ENCODE measurements at regions of chr1 and their contacts with region 1.

Region 1: GRCh38 chr1:206716870-206717673 is 32.4 kb downstream of the MAPKAPK2 start:
- DNase-seq: no peak
- ATAC-seq: peak; percentile 32
- H3K4me3 ChIP-seq: no peak overlapping the region
- H3K4me3 Mint-ChIP-seq: peak overlapping the region; percentile 32 to 72 (median 54)
- H3K27ac ChIP-seq: no peak overlapping the region
- H3K27ac Mint-ChIP-seq: peak overlapping the region; percentile 15 to 89 (median 67)
- H3K4me1 ChIP-seq: peaks cover 30 to 69% of the 10 kb centered on the region in 2 donors
- H3K4me1 Mint-ChIP-seq: peaks cover 65 to 87% (median 79%) of the 10 kb centered on the region in 7 donors
- H3K27me3 ChIP-seq: no peaks in the 10 kb centered on the region
- H3K27me3 Mint-ChIP-seq: no peaks in the 10 kb centered on the region

Region 2: GRCh38 chr1:206658264-206658980 is 58.6 kb before region 1 on chr1:
- CTCF ChIA-PET with region 1: no interaction called
- POLR2A ChIA-PET with region 1: no interaction called
- intact Hi-C with region 1: loop called in 1 of 2 experiments (anchors 2 kb)
- DNase-seq: peak; percentile 17 to 69 (median 43)
- ATAC-seq: peak; percentile 95
- H3K4me3 ChIP-seq: no peak overlapping the region
- H3K4me3 Mint-ChIP-seq: peak overlapping the region in 1 of 10 donors; percentile 62
- H3K27ac ChIP-seq: no peak overlapping the region
- H3K27ac Mint-ChIP-seq: peak overlapping the region in 1 of 9 donors; percentile 51
- H3K4me1 ChIP-seq: no peaks in the 10 kb centered on the region
- H3K4me1 Mint-ChIP-seq: peaks cover 5 to 20% (median 10%) of the 10 kb centered on the region in 7 donors
- H3K27me3 ChIP-seq: peaks cover 0 to 4% of the 10 kb centered on the region in 2 donors
- H3K27me3 Mint-ChIP-seq: peaks cover 13 to 42% (median 37%) of the 10 kb centered on the region in 5 donors

Region 3: DNA sequence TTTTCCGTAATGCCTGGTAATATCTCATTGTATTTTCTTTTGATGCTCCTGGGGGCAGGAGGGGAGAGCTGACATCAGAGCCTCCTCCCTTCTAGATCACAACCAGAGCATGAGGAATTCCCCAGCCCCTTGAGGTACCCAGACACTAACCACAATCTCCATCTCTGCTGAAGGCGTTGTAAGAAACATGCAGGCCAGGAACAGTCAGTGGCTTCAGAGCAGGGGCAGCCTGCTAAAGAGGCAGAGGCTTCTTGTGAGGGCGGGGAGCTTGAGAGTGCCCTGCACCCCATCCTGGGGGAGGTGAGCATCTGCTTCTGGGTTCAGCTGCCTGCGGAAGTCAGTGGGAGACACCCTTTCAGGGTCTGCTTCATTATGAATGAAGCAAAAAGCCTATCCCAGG is 13.4 kb before region 1 on chr1:
- CTCF ChIA-PET with region 1: interaction called, 5 read pairs
- POLR2A ChIA-PET with region 1: interaction called, 7 read pairs
- intact Hi-C with region 1: loop called (anchors 1 to 2 kb)
- DNase-seq: peak in 8 of 9 donors; percentile 32 to 84 (median 58)
- ATAC-seq: peak; percentile 89
- H3K4me3 ChIP-seq: no peak overlapping the region
- H3K4me3 Mint-ChIP-seq: peak overlapping the region; percentile 25 to 82 (median 64)
- H3K27ac ChIP-seq: peak overlapping the region; percentile 47
- H3K27ac Mint-ChIP-seq: peak overlapping the region; percentile 15 to 89 (median 77)
- H3K4me1 ChIP-seq: peaks cover 55 to 56% of the 10 kb centered on the region in 2 donors
- H3K4me1 Mint-ChIP-seq: peaks cover 78 to 94% (median 92%) of the 10 kb centered on the region in 7 donors
- H3K27me3 ChIP-seq: no peaks in the 10 kb centered on the region
- H3K27me3 Mint-ChIP-seq: no peaks in the 10 kb centered on the region

Region 4: DNA sequence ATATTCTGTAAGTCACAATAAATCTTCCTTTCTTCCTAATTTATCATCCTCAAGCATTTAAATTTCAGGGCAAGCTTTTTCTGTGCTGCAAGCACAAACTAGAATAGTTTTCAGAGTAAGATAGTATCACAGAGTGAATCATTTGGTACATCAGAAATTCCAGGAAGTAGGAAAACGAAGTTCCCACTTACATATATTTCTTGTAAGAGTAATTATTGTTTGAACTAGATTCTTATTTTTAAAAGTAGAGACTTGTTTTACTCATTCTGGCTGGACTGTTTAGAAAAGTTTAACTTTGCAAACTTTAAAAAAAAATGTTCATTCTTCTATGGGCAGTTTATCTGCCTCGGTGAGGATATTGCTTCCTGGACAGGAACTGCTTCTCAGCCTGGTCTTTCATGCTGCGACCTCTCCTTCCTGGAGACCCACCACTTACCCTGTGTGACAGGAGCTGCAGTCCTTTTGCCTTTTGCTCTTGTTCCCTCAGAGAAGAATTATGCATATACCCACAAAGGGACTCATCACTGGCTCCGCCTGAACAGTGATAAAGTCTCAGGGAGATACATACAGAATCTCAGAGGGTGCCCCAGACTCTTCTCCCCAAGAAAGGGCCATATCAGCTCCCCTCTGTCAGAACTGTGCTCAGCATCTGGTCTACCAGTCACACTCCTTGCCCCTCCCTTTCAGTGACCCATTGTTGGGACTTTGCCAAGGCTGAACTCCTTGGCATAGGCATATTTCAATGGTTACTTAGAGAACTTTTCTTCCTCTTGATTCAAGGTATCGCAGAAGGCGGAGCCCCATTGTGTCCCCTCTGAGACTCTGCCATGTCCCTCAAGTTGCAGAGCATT is 501.7 kb after region 1 on chr1:
- CTCF ChIA-PET with region 1: no interaction called
- POLR2A ChIA-PET with region 1: no interaction called
- intact Hi-C with region 1: no loop called
- DNase-seq: no peak
- ATAC-seq: no peak
- H3K4me3 ChIP-seq: no peak overlapping the region
- H3K4me3 Mint-ChIP-seq: no peak overlapping the region
- H3K27ac ChIP-seq: no peak overlapping the region
- H3K27ac Mint-ChIP-seq: peak overlapping the region in 2 of 9 donors; percentile 38 to 79
- H3K4me1 ChIP-seq: no peaks in the 10 kb centered on the region
- H3K4me1 Mint-ChIP-seq: peaks cover 2 to 14% (median 9%) of the 10 kb centered on the region in 7 donors
- H3K27me3 ChIP-seq: no peaks in the 10 kb centered on the region
- H3K27me3 Mint-ChIP-seq: peaks cover 0 to 4% (median 0%) of the 10 kb centered on the region in 5 donors